HEK293 (cell line): ENCODE measurements at regions of chr2 and their contacts with region 1.

Region 1: DNA sequence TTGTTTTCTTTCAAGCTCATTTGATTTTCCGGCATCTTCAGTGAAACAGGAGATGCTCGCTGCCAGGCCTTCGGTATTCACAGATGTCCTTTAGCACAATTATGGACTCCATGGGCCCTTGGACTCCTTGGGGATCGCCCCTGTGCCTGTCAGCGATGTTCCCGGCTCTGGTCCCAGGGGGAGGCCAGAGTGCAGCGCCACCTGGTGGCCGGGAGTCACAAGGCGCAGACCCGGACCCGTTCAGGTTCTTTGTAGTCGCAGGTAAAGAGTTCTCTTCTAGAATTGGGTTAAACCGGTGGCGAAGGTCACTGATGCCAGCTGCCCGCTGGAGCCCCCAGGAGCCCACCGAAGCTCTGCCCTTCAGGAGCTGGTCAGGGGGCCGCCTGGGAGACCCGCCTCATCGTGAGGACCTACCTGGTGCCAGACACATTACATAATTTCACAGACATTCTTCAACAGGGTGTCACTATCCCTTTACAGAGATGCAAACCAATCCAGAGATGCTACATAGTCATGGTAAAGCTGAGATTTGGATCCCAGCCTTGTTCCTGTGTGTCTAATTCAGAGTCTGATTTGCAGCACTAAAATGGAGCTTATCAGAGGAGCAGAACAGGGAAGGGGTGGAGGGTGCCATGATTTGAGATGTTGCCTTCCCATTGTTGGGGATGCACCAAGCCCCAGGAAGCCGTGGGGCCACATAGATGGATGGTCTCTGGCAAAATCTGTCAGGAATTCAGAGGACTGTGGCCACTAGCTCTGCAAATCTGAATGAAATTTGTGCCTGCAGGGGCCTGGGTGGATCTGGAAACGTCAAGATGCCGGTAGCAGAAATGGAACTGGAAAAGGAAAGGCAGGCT is 6.0 kb upstream of the INPP5D start:
- H3K4me3 ChIP-seq: no peak overlapping the region
- H3K27ac ChIP-seq: no peak overlapping the region
- H3K4me1 ChIP-seq: no peaks in the 10 kb centered on the region
- CTCF ChIP-seq: peak; percentile 69

Region 2: DNA sequence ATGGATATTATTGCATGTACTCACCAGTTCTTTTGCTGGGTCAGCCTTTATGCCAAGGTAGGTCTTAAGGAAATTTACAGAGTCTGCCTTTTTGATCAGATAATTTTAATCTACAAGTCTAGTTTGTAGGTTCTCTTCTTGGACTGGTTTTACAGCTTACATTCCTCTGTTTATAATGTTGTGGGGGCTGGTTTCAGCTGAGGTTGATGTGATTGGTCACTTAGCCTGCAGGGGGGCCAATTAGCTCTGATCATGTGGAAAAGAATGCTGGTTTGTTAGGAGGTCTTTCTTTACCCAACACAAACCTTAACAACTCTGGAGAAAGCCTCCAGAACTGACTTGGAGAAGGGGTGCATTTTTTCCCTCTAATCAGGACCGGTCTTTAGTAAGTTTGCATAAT is 277.7 kb before region 1 on chr2 and contains the start of gene KCNJ13:
- CTCF ChIA-PET with region 1: no interaction called
- POLR2A ChIA-PET with region 1: no interaction called
- H3K4me3 ChIP-seq: no peak within 1 kb of the TSS
- H3K27ac ChIP-seq: no peak within 1 kb of the TSS
- H3K4me1 ChIP-seq: peaks cover 20% of the 10 kb centered on the region
- CTCF ChIP-seq: no peak

Region 3: DNA sequence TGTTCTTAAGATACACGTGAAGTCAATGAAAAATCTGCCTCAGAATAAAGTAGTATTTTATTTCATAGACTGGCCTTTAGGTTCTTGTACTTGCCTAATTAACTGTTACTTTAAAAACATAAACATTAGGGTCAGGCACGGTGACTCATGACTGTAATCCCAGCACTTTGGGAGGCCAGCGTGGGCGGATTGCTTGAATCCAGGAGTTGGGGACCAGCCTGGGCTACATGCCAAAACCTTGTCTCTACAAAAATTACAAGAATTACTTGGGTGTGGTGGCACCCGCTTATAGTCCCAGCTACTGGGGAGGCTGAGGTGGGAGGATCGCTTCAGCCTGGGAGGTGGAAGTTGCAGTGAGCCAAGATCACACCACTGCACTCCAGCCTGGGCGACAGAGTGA is 200.1 kb before region 1 on chr2:
- CTCF ChIA-PET with region 1: interaction called, 28 read pairs
- POLR2A ChIA-PET with region 1: no interaction called
- H3K4me3 ChIP-seq: no peak overlapping the region
- H3K27ac ChIP-seq: no peak overlapping the region
- H3K4me1 ChIP-seq: peaks cover 5% of the 10 kb centered on the region
- CTCF ChIP-seq: no peak

Region 4: DNA sequence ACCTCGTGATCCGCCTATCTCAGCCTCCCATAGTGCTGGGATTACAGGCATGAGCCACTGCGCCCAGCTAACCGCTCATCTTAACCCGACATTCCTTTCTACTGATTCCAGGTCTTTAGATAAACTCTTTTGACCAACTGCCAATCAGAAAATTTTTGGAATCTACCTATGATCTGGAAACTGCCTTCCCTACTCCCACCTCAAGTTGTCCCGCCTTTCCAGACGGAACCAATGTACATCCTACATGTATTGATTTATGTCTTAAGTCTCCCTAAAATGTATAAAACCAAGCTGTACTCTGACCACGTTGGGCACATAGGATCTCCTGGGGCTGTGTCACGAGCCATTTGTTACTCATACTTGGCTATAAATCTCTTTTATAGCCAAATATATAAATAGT is 24.8 kb before region 1 on chr2:
- CTCF ChIA-PET with region 1: interaction called, 33 read pairs
- POLR2A ChIA-PET with region 1: no interaction called
- H3K4me3 ChIP-seq: no peak overlapping the region
- H3K27ac ChIP-seq: no peak overlapping the region
- H3K4me1 ChIP-seq: no peaks in the 10 kb centered on the region
- CTCF ChIP-seq: no peak

Region 5: DNA sequence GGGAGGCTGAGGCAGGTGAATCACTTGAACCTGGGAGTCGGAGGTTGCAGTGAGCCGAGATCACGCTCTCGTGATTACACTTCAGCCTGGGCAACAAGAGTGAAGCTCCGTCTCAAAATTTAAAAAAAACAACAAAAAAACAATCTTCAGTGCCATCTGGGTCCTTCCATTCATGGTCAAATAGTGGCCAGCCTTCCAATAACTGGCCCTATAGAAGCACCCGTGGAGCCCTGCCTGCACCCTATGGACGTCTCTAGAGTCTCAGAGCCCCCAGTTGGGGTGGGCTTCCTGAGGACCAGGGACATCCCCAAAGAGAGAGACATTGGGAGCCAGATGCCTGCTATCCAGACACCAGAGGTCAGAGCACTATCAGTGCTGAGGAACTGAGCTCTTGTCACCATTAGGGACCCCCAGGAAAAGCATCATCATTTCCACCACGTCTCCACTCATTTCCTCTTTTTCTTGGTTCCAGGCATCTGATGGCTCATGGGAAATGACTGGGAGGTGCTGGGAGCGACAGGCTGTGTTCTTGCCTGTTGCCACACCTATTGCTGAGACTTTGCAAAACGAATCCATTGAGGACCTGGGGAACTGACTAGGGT is 12.3 kb before region 1 on chr2:
- CTCF ChIA-PET with region 1: interaction called, 22 read pairs
- POLR2A ChIA-PET with region 1: no interaction called
- H3K4me3 ChIP-seq: no peak overlapping the region
- H3K27ac ChIP-seq: no peak overlapping the region
- H3K4me1 ChIP-seq: no peaks in the 10 kb centered on the region
- CTCF ChIP-seq: no peak

Region 6: DNA sequence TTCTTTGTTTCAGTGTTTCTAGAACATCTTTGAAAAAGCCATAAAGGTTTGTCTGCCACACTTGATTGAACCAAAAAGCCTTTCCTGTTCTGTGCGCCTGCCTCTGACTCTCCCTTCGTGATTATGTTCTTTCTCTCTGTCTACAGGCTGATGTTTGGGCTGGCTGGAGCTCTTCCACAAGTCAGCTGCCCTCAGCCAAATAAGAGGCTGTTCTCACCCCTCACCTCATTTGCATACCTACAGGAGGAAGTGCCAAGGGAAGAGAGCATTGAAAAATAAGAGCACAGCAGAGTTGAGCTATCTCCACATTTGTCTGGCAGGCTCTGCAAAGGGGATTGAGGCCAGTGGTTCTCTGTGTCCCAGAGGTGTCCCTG is 21.8 kb after region 1 on chr2:
- CTCF ChIA-PET with region 1: interaction called, 19 read pairs
- POLR2A ChIA-PET with region 1: no interaction called
- H3K4me3 ChIP-seq: no peak overlapping the region
- H3K27ac ChIP-seq: no peak overlapping the region
- H3K4me1 ChIP-seq: no peaks in the 10 kb centered on the region
- CTCF ChIP-seq: no peak

Region 7: DNA sequence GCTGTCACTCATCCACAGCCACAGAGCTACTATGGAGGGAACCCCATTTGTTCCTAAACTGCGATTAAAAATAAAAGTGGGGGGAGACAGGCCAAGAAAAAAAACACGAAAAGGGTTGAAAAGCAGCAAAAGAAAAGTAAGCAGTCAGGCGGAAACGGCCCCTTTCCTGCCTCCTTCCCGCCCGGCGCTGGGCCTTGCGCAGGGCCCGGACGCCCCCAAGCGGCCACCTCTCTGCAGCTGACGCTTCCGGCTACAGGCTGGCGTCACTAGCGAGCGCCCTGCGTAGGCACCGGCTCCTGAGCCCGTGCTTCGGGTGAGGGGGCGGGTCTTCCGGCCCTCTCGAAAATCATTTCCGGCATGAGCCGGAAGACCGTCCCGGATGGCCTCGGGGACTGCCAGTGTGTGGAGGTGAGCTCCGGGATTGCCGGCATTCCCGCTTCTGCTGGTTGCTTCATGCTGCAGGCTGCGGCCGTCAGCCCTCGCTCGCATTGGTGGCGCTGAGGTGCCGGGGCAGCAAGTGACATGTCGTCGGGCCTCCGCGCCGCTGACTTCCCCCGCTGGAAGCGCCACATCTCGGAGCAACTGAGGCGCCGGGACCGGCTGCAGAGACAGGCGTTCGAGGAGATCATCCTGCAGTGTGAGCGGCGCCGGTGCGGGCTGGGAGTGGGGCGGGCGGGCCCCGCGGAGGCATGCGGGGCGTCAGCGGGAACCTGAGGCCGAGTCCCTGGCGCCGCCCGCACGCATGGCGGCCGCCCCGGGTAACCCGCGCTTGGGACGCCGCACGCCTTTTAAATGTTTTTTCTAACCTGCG is 197.4 kb after region 1 on chr2 and contains the start of gene ATG16L1:
- CTCF ChIA-PET with region 1: interaction called, 13 read pairs
- POLR2A ChIA-PET with region 1: no interaction called
- H3K4me3 ChIP-seq: peak within 1 kb of the TSS; percentile 98
- H3K27ac ChIP-seq: peak within 1 kb of the TSS; percentile 45
- H3K4me1 ChIP-seq: no peaks in the 10 kb centered on the region
- CTCF ChIP-seq: peak; percentile 99